MCF 10A (cell line): ENCODE measurements at regions of chr1 and their contacts with region 1.

Region 1: GRCh38 chr1:16366722-16367257 is at the start of gene SZRD1:
- DNase-seq: peak; percentile 99
- H3K4me3 Mint-ChIP-seq: peak within 1 kb of the TSS; percentile 74
- H3K27ac Mint-ChIP-seq: peak within 1 kb of the TSS; percentile 98
- H3K4me1 Mint-ChIP-seq: peaks cover 13% of the 10 kb centered on the region
- H3K27me3 Mint-ChIP-seq: no peaks in the 10 kb centered on the region
- CTCF ChIP-seq: no peak
- total RNA-seq, gene SZRD1: 108 and 114 TPM in 2 replicates

Region 2: GRCh38 chr1:15409388-15410222 is 957.2 kb before region 1 on chr1 and contains the start of gene EFHD2:
- CTCF ChIA-PET with region 1: no interaction called
- POLR2A ChIA-PET with region 1: no interaction called
- intact Hi-C with region 1: no loop called
- DNase-seq: peak; percentile 76
- H3K4me3 Mint-ChIP-seq: peak within 1 kb of the TSS; percentile 88
- H3K27ac Mint-ChIP-seq: peak within 1 kb of the TSS; percentile 96
- H3K4me1 Mint-ChIP-seq: peaks cover 35% of the 10 kb centered on the region
- H3K27me3 Mint-ChIP-seq: no peaks in the 10 kb centered on the region
- CTCF ChIP-seq: no peak
- total RNA-seq, gene EFHD2: 45.1 and 48.5 TPM in 2 replicates

Region 3: GRCh38 chr1:16009030-16009709 is 357.6 kb before region 1 on chr1:
- CTCF ChIA-PET with region 1: interaction called, 4 read pairs
- POLR2A ChIA-PET with region 1: no interaction called
- intact Hi-C with region 1: loop called (anchors 10 kb)
- DNase-seq: peak; percentile 81
- H3K4me3 Mint-ChIP-seq: no peak overlapping the region
- H3K27ac Mint-ChIP-seq: no peak overlapping the region
- H3K4me1 Mint-ChIP-seq: peaks cover 15% of the 10 kb centered on the region
- H3K27me3 Mint-ChIP-seq: no peaks in the 10 kb centered on the region
- CTCF ChIP-seq: peak; percentile 97

Region 4: DNA sequence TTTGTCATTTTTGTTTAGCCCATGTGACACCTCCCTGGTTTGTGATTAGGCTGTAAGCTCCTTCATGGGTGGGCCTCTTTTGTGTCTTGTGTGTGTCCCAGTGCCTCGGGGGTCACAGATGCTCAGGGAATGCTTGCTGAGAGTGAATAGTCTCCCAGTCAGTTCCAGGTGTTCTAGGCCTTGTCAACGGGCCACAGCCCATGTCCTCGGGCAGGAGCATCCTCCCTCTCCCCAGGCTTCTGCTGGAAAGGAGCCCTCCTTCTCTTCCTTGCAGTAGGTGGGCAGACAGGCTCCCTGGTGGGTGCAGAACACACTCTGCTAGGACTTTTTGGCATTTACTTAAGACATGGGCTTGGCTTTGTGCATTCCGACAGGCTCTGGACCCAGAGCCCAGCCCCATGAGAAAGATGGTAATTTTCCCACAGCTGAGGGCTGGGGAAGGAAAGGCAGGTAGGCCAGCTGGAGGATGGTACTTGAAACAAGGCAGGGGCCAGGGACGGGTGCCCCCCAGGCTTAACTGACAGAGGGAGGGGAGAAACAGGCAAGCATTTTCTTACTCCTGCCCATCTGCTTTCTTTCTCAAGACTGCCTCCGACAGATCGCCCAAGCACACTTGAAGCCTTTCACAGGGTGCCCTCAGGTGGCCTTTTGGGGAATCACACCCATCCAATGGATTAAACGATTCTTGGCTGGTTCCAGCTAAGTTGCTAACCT is 122.7 kb before region 1 on chr1:
- CTCF ChIA-PET with region 1: interaction called, 10 read pairs
- POLR2A ChIA-PET with region 1: interaction called, 14 read pairs
- intact Hi-C with region 1: loop called (anchors 2 kb)
- DNase-seq: peak; percentile 85
- H3K4me3 Mint-ChIP-seq: no peak overlapping the region
- H3K27ac Mint-ChIP-seq: peak overlapping the region; percentile 27
- H3K4me1 Mint-ChIP-seq: peaks cover 17% of the 10 kb centered on the region
- H3K27me3 Mint-ChIP-seq: no peaks in the 10 kb centered on the region
- CTCF ChIP-seq: peak; percentile 77

Region 5: DNA sequence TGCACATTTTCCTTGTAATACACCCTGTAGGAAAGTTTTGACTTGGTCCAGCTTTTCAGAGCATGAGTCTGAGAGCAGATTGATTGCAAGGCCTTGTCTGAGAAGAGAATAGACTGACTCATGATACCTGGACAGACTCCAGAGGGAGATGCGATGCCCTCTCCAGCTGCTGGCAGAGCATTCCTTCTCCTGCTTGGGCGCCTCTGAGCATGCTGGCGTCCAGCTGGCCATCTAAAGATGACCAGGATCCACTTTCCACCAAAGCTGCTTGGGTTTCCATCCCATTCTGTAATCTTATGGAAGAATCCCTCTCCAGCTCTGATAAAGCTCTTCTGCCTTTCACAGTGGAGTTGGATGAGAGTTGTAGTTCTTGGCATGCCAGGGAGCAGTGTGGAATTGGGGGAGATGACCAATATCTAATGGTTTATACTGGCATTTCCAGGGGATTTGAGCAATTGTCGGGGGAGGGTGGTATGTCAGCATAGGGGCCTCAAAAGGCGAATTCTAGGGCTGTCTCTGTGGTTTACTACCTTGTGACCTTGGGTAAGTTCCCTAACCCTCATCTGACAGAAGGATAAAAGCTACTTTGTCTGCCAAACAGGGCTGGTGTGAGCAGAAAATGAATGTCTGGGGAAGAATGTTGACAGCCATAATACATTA is 19.8 kb after region 1 on chr1:
- CTCF ChIA-PET with region 1: interaction called, 6 read pairs
- POLR2A ChIA-PET with region 1: interaction called, 21 read pairs
- intact Hi-C with region 1: no loop called
- DNase-seq: peak; percentile 89
- H3K4me3 Mint-ChIP-seq: no peak overlapping the region
- H3K27ac Mint-ChIP-seq: peak overlapping the region; percentile 86
- H3K4me1 Mint-ChIP-seq: peaks cover 30% of the 10 kb centered on the region
- H3K27me3 Mint-ChIP-seq: no peaks in the 10 kb centered on the region
- CTCF ChIP-seq: no peak

Region 6: DNA sequence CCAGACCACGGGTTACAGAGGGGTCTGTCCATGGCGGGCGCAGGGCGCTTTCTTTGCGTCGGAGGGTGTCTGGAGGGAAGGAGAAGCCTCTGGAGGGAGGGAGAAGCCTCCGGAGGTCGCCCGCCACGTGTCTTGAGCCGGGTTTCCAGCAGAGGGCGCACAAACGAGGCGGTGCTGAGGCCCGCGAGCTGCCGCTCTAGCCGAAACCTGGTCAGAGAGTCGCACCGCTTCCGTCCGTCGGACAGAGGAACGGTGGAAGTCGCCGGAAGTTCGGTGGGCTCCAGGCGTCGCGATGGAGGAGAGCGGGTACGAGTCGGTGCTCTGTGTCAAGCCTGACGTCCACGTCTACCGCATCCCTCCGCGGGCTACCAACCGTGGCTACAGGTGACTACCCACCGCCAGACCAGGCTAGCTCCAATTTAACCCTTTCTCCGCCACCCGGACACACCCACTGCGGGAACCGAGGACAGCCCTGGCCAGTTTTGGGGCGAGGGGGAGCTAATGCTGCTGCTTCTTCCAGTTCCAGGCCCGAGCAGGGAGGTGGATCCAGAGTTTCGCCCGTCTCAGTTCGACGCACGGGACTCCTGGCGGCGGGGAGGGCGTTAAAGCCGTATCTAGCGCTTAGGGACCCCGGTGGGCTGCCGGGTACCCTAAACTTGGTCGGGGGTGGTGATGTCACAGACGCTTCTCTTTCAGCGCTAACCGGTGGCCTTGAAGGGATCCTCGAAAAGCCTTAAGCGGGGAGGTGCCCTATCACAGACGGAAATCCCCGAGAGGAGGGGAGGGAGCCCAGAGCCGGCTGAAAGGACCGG is 73.9 kb after region 1 on chr1 and contains the start of gene NECAP2:
- CTCF ChIA-PET with region 1: interaction called, 4 read pairs
- POLR2A ChIA-PET with region 1: interaction called, 14 read pairs
- intact Hi-C with region 1: no loop called
- DNase-seq: peak; percentile 88
- H3K4me3 Mint-ChIP-seq: peak within 1 kb of the TSS; percentile 93
- H3K27ac Mint-ChIP-seq: peak within 1 kb of the TSS; percentile 89
- H3K4me1 Mint-ChIP-seq: peaks cover 11% of the 10 kb centered on the region
- H3K27me3 Mint-ChIP-seq: no peaks in the 10 kb centered on the region
- CTCF ChIP-seq: peak; percentile 89
- total RNA-seq, gene NECAP2: 34.1 and 41.4 TPM in 2 replicates